K562 (cell line): ENCODE measurements at regions of chr6 and their contacts with region 1.

Region 1: DNA sequence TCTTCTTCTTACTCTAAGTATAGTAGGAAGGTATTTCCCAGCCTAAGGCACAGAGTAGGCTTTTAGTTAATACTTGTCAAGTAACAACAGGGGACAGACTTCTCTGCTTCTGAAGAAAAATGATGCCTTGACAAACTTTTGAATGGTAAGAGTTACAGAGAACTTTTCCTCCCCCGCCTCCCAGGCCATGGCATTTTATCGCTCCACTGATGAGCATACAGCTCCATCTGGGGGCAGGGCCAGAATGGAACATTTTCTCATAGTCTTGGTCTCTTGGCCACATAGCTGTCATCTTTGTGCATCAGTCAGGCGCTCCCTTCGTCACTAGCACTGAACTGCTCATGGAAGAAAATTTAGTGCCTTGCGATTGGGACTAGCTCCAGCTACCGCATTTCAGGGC is 1066.8 kb upstream of the CITED2 start:
- DNase-seq: peak in 3 of 4 experiments; percentile 9 to 47 (median 11)
- ATAC-seq: peak; percentile 80
- H3K4me3 ChIP-seq: no peak overlapping the region
- H3K27ac ChIP-seq: no peak overlapping the region
- H3K4me1 ChIP-seq: no peaks in the 10 kb centered on the region
- H3K27me3 ChIP-seq: no peaks in the 10 kb centered on the region
- CTCF ChIP-seq: peak; percentile 48 to 59 (median 57)
- EP300 ChIP-seq: no peak
- POLR2A ChIP-seq: no peak
- RAD21 ChIP-seq: peak; percentile 61 to 71

Region 2: DNA sequence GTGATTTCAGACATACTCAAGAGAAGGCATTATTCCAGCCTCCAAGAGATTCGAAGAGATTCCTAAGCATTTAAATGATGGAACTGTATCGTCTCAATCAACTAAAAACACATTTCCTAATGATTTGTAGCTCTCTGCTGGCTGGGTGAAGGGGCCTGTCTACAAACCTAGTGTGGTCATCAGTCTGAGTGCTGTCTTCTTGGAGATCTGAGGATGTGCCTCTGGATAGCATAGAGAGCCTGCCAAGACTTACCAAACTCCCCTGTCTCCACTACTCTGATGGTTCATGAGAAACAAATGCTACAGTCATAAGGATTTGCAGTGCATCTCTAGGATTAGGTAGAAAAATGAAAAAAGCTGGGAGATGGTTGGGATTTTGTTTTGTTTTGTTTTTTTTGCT is 889.9 kb before region 1 on chr6:
- CTCF ChIA-PET with region 1: no interaction called
- POLR2A ChIA-PET with region 1: no interaction called
- in situ Hi-C with region 1: no loop called
- intact Hi-C with region 1: no loop called
- DNase-seq: no peak
- ATAC-seq: 0 out of 3 replicates have a peak, but pooled peaks have one; percentile 21
- H3K4me3 ChIP-seq: no peak overlapping the region
- H3K27ac ChIP-seq: no peak overlapping the region
- H3K4me1 ChIP-seq: peaks cover 0 to 11% of the 10 kb centered on the region in 2 experiments; a peak in 3 of 5 replicates
- H3K27me3 ChIP-seq: no peaks in the 10 kb centered on the region
- CTCF ChIP-seq: no peak
- EP300 ChIP-seq: no peak
- POLR2A ChIP-seq: no peak
- RAD21 ChIP-seq: no peak

Region 3: GRCh38 chr6:140052756-140053729 is 388.2 kb before region 1 on chr6:
- CTCF ChIA-PET with region 1: no interaction called
- POLR2A ChIA-PET with region 1: no interaction called
- in situ Hi-C with region 1: no loop called
- intact Hi-C with region 1: loop called (anchors 2 kb)
- DNase-seq: peak; percentile 10 to 38 (median 22)
- ATAC-seq: peak; percentile 76
- H3K4me3 ChIP-seq: no peak overlapping the region
- H3K27ac ChIP-seq: no peak overlapping the region
- H3K4me1 ChIP-seq: no peaks in the 10 kb centered on the region
- H3K27me3 ChIP-seq: peaks cover 5 to 7% of the 10 kb centered on the region in 2 experiments; a peak in 2 of 5 replicates
- CTCF ChIP-seq: peak; percentile 45 to 59 (median 57); a peak in 5 of 6 replicates
- EP300 ChIP-seq: no peak
- POLR2A ChIP-seq: no peak
- RAD21 ChIP-seq: peak in 1 of 2 experiments; percentile 72; a peak in 3 of 4 replicates

Region 4: GRCh38 chr6:140174515-140174914 is 266.7 kb before region 1 on chr6:
- CTCF ChIA-PET with region 1: no interaction called
- POLR2A ChIA-PET with region 1: no interaction called
- in situ Hi-C with region 1: no loop called
- intact Hi-C with region 1: no loop called
- DNase-seq: no peak
- ATAC-seq: no peak
- H3K4me3 ChIP-seq: no peak overlapping the region
- H3K27ac ChIP-seq: no peak overlapping the region
- H3K4me1 ChIP-seq: no peaks in the 10 kb centered on the region
- H3K27me3 ChIP-seq: no peaks in the 10 kb centered on the region
- CTCF ChIP-seq: no peak
- EP300 ChIP-seq: no peak
- POLR2A ChIP-seq: no peak
- RAD21 ChIP-seq: no peak